ENCODE measurements at regions of chr12 and their contacts with region 1.

Region 1: GRCh38 chr12:122123051-122123760 is 44.6 kb downstream of the MLXIP start:
- DNase-seq: peak; percentile 44
- H3K4me3 ChIP-seq: no peak overlapping the region
- H3K27ac ChIP-seq: peak overlapping the region; percentile 4
- H3K4me1 ChIP-seq: peaks cover 65% of the 10 kb centered on the region
- H3K27me3 ChIP-seq: no peaks in the 10 kb centered on the region
- CTCF ChIP-seq: peak; percentile 80

Region 2: DNA sequence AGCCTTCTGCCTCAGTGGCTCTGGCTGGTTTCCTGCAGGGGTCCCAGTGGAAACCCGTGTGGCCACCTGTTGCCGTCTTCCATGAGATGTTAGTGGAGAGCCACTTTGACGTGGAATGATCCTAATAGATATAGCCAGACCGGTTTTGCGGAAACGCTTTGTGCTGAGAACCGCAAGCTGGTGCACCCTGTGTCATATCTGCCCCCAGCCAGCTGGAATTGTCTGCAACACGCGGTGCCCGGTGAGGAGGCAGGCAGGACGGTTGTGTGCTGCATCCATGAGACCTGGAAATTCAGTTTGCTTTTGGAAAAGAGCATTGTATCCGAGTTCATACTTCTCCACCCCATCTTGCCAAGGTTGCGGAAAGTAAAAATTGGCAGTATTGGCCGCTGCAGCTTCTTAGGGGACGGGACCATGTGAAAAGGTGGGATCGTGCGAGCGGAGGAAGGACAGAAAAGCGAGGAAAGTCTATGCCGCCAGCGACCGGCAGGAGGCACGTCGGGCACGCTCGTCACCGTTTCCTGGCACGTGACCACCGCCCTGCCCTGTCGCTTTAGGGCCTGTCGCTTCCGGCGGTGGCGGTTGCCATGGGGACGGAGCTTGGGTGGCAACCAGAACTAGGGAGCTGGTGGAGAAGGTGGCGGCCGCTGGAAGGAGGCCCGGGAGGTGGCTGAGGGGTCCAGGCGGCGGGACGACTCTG is 205.1 kb before region 1 on chr12 and contains the start of gene CFAP251:
- intact Hi-C with region 1: loop called (anchors 10 kb)
- DNase-seq: peak; percentile 95
- H3K4me3 ChIP-seq: peak within 1 kb of the TSS; percentile 69
- H3K27ac ChIP-seq: peak within 1 kb of the TSS; percentile 39
- H3K4me1 ChIP-seq: peaks cover 23% of the 10 kb centered on the region
- H3K27me3 ChIP-seq: no peaks in the 10 kb centered on the region
- CTCF ChIP-seq: peak; percentile 75
- total RNA-seq, gene CFAP251: 0.91 TPM

Region 3: GRCh38 chr12:122054842-122055520 is 68.2 kb before region 1 on chr12:
- intact Hi-C with region 1: loop called (anchors 2 kb)
- DNase-seq: no peak
- H3K4me3 ChIP-seq: no peak overlapping the region
- H3K27ac ChIP-seq: no peak overlapping the region
- H3K4me1 ChIP-seq: peaks cover 37% of the 10 kb centered on the region
- H3K27me3 ChIP-seq: no peaks in the 10 kb centered on the region
- CTCF ChIP-seq: no peak

Measured in left ventricle myocardium inferior (tissue), 1 donor.